ENCODE measurements at regions of chr12 and their contacts with region 1.

Region 1: DNA sequence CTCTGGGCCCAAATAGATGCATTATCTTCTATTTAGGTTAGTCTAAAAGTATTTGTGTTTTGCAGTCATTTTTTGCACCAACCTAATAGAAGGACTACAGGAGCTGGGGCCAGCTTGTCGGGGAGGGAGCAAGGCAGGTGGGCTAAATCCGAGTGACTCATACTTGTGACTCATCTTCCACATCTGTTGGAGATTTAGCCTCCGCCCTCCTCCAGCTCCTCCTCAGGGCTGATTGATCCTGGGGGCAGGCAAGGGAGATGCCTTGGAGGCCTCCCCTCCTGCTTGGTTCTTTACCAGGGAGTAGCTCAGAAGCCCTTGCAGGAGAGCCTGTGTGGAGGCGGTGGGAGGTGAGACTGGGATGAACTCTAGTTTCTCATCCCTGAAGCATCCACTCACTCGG is 27.9 kb downstream of the RHOF start:
- DNase-seq: no peak
- ATAC-seq: no peak
- H3K4me3 ChIP-seq: no peak overlapping the region
- H3K27ac ChIP-seq: no peak overlapping the region
- H3K4me1 ChIP-seq: peaks cover 0 to 2% of the 10 kb centered on the region in 2 donors
- H3K27me3 ChIP-seq: no peaks in the 10 kb centered on the region

Region 2: DNA sequence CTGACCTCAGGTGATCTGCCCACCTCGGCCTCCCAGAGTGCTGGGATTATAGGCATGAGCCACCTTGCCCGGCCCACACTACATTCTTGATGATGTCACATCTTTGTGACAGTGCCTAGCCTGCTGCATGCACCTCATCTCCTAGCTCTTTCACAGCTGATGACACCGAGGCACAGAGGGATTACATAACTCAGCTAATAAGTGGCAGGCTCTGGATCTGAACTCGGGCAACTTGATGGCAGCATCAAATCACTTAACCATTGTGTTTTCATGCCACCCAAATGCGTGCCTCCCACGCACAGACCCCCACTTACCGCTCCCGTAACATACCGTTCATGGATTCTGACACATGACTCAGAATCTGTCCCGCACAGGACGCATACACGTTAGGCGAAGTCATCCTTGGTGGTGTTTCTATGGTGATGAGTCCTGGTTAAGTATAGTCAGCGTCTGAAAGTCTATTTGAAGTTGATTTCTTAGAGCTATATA is 45.6 kb before region 1 on chr12:
- intact Hi-C with region 1: loop called in 1 of 2 experiments (anchors 5 kb)
- DNase-seq: no peak
- ATAC-seq: no peak
- H3K4me3 ChIP-seq: no peak overlapping the region
- H3K27ac ChIP-seq: no peak overlapping the region
- H3K4me1 ChIP-seq: no peaks in the 10 kb centered on the region
- H3K27me3 ChIP-seq: no peaks in the 10 kb centered on the region